ENCODE measurements at regions of chr17 and their contacts with region 1.

Region 1: DNA sequence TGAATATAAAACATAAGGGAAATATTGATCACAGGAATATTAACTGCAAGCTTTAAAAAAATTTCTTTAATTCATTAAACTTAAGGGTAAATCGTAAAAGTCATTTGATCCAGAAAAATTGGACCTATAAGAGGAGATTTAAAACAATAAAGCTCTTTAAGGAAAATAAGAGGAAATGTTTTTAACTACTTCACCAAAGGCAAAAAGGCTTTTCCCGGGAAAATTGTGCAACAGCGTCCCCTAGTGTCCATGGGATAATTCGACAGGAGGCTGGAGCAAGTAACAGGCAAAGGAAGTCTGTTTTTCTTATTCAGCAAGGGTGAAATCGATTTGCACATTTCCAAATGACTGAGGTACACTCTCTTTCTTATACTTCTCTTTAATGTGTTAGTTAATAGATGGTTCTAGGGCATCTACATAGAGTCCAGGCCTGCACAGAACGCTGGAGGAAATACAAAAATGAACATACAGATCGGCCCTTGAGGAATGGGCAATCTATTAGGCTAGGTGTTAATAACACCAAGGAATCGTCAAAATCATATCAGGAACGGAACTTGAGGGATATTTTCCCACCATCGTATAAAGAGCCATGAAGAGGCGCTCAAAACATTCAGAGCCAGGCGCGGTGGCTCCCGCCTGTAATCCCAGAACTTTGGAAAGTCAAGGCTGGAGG is 61.4 kb downstream of the ZNF18 start:
- DNase-seq: peak; percentile 43
- ATAC-seq: peak; percentile 67; the same call in 1 of the 2 replicates
- H3K4me3 ChIP-seq: no peak overlapping the region
- H3K27ac ChIP-seq: no peak overlapping the region
- H3K4me1 ChIP-seq: no peaks in the 10 kb centered on the region
- H3K27me3 ChIP-seq: no peaks in the 10 kb centered on the region; the same call in 1 of the 2 replicates
- CTCF ChIP-seq: peak; percentile 73 to 99 (median 92); a peak in 5 of 6 replicates
- POLR2A ChIP-seq: no peak
- RAD21 ChIP-seq: peak; percentile 84

Region 2: DNA sequence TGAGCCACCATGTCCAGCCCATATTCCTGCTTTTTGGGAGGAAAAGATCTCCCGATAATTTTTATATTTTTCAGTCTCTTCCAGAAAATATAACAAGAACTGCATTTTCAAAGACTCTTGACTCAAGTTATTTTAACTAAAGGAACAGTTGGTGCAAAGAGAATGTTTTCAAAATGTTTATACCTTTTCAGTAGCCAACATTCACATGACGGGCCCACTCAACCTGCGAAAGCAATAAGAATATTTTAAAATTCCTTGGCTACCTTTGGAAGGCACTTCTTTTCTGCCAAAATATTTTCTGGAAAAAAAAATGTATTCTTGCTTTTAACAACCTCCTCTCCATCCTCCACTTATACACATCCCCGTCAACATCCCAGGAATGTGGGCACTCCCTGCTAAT is 78.9 kb before region 1 on chr17:
- CTCF ChIA-PET with region 1: no interaction called
- POLR2A ChIA-PET with region 1: no interaction called
- RAD21 ChIA-PET with region 1: no interaction called
- intact Hi-C with region 1: no loop called
- DNase-seq: no peak
- ATAC-seq: no peak
- H3K4me3 ChIP-seq: no peak overlapping the region
- H3K27ac ChIP-seq: no peak overlapping the region
- H3K4me1 ChIP-seq: no peaks in the 10 kb centered on the region
- H3K27me3 ChIP-seq: no peaks in the 10 kb centered on the region
- CTCF ChIP-seq: no peak
- POLR2A ChIP-seq: no peak
- RAD21 ChIP-seq: no peak

Region 3: DNA sequence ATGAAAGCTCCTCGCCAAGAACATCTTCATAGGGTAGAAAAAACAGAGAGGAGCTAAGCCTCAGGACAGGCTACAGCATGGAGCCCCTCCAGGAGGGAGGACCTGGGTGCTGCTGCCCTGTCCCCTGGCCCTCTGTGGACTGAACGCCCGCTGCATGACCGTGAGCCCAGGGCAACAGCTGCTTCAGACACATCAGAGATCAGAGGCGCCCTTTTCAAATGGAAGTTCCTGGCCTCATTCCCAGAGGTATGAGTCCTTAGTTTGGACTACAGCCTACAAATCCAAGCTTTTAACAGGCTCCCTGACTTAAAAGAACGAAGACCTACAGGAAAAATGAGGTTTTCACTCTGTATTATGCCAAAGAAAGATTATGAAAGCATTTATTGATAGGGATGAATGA is 12.9 kb after region 1 on chr17:
- CTCF ChIA-PET with region 1: interaction called, 14 read pairs
- POLR2A ChIA-PET with region 1: no interaction called
- RAD21 ChIA-PET with region 1: no interaction called
- intact Hi-C with region 1: no loop called
- DNase-seq: peak; percentile 51
- ATAC-seq: peak; percentile 81
- H3K4me3 ChIP-seq: peak overlapping the region in 1 of 2 experiments; percentile 44; a peak in 3 of 4 replicates
- H3K27ac ChIP-seq: peak overlapping the region; percentile 39; the same call in 1 of the 2 replicates
- H3K4me1 ChIP-seq: peaks cover 17 to 37% of the 10 kb centered on the region in 2 experiments
- H3K27me3 ChIP-seq: no peaks in the 10 kb centered on the region
- CTCF ChIP-seq: no peak
- POLR2A ChIP-seq: no peak
- RAD21 ChIP-seq: no peak

Measured in HCT116 (cell line).